PC-3 (cell line): ENCODE measurements at regions of chr14 and their contacts with region 1.

Region 1: GRCh38 chr14:79809849-79810612 is 401.3 kb downstream of the DIO2 start:
- DNase-seq: peak; percentile 64
- ATAC-seq: peak; percentile 67
- H3K4me3 ChIP-seq: no peak overlapping the region
- H3K27ac ChIP-seq: no peak overlapping the region
- H3K4me1 ChIP-seq: no peaks in the 10 kb centered on the region
- H3K27me3 ChIP-seq: no peaks in the 10 kb centered on the region
- CTCF ChIP-seq: peak; percentile 71

Region 2: GRCh38 chr14:79161571-79161970 is 648.5 kb before region 1 on chr14:
- CTCF ChIA-PET with region 1: no interaction called
- POLR2A ChIA-PET with region 1: no interaction called
- intact Hi-C with region 1: no loop called
- DNase-seq: no peak
- ATAC-seq: no peak
- H3K4me3 ChIP-seq: no peak overlapping the region
- H3K27ac ChIP-seq: no peak overlapping the region
- H3K4me1 ChIP-seq: no peaks in the 10 kb centered on the region
- H3K27me3 ChIP-seq: no peaks in the 10 kb centered on the region
- CTCF ChIP-seq: no peak

Region 3: DNA sequence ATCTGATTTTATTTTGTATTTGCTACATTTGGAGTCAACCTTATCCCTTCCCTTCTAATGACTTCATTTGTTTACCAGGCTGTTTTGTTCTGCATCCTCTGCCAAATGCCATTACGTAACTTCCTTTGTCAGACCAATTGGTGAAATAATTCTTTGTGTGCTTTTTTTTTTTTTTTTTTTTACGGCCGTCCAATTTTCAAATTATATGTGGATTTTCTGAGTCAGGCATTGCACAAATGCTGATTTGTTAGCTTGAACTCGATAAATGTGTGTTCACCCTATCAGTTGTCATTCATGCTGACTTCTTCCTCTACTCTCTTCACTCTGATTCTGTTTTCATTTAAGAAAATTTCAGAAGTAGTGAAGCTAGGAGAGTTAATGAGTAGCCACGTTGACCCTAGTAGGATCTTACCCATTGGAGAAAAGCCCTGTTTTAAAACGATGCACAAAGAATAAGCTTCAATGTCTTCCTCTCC is 15.1 kb after region 1 on chr14:
- CTCF ChIA-PET with region 1: no interaction called
- POLR2A ChIA-PET with region 1: no interaction called
- intact Hi-C with region 1: no loop called
- DNase-seq: peak; percentile 61
- ATAC-seq: peak; percentile 37; the same call in 1 of the 2 replicates
- H3K4me3 ChIP-seq: no peak overlapping the region
- H3K27ac ChIP-seq: no peak overlapping the region
- H3K4me1 ChIP-seq: no peaks in the 10 kb centered on the region
- H3K27me3 ChIP-seq: no peaks in the 10 kb centered on the region
- CTCF ChIP-seq: no peak

Region 4: GRCh38 chr14:79960288-79960687 is 150.3 kb after region 1 on chr14:
- CTCF ChIA-PET with region 1: no interaction called
- POLR2A ChIA-PET with region 1: no interaction called
- intact Hi-C with region 1: no loop called
- DNase-seq: no peak
- ATAC-seq: no peak
- H3K4me3 ChIP-seq: no peak overlapping the region
- H3K27ac ChIP-seq: no peak overlapping the region
- H3K4me1 ChIP-seq: no peaks in the 10 kb centered on the region
- H3K27me3 ChIP-seq: no peaks in the 10 kb centered on the region
- CTCF ChIP-seq: no peak

Region 5: GRCh38 chr14:80037349-80037748 is 227.3 kb after region 1 on chr14:
- CTCF ChIA-PET with region 1: no interaction called
- POLR2A ChIA-PET with region 1: no interaction called
- intact Hi-C with region 1: loop called (anchors 1 kb)
- DNase-seq: peak; percentile 36
- ATAC-seq: peak; percentile 74
- H3K4me3 ChIP-seq: no peak overlapping the region
- H3K27ac ChIP-seq: no peak overlapping the region
- H3K4me1 ChIP-seq: no peaks in the 10 kb centered on the region
- H3K27me3 ChIP-seq: no peaks in the 10 kb centered on the region
- CTCF ChIP-seq: 0 out of 2 replicates have a peak, but pooled peaks have one; percentile 27

Region 6: GRCh38 chr14:80862983-80863382 is 1053.0 kb after region 1 on chr14:
- CTCF ChIA-PET with region 1: interaction called, 3 read pairs
- POLR2A ChIA-PET with region 1: no interaction called
- intact Hi-C with region 1: loop called (anchors 5 kb)
- DNase-seq: peak; percentile 36
- ATAC-seq: no peak
- H3K4me3 ChIP-seq: no peak overlapping the region
- H3K27ac ChIP-seq: no peak overlapping the region
- H3K4me1 ChIP-seq: no peaks in the 10 kb centered on the region
- H3K27me3 ChIP-seq: no peaks in the 10 kb centered on the region
- CTCF ChIP-seq: peak; percentile 65